Activated naive CD8-positive, alpha-beta T cell treated with anti-CD3 and anti-CD28 coated beads, Interleukin-2, amount 10 ng/mL, durations not matched to agents 7 days and 5 days (primary cell): ENCODE measurements at regions of chr6 and their contacts with region 1.

Region 1: DNA sequence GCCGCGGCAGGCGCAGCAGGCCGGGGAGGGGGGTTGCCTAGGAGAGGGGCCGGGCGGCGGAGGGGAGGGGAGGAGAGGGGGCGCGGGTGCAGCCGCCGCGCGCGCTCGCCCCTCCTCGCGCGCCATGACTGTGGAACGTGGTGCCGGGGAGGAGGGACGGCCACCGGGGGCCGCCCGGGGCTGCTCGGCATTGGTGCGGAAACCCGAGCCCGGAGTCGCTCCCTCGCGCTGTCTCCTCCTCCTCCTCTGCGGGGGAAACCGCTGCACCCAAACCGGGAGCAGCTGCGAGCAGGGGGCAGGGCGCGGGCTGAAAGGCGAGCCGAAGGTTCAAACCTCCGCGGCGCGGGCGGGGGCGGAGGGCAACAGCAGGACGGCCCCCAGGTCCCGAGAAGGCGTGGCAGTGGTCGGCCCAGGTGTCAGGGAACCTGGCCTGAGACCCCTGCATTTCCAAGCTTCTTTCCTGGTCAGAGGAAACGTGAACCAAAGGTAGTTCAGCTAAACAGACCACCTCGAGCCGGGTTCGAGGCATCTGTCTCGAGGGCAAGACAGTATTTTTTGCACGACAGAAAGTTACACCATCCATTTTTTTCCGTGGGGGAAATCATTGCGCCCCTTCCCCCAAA is 1.4 kb upstream of the TRERF1 start:
- DNase-seq: peak; percentile 81
- ATAC-seq: peak; percentile 81
- H3K4me3 Mint-ChIP-seq: peak overlapping the region; percentile 100
- H3K27ac Mint-ChIP-seq: no peak overlapping the region
- H3K4me1 Mint-ChIP-seq: peaks cover 29% of the 10 kb centered on the region
- H3K27me3 Mint-ChIP-seq: peaks cover 14% of the 10 kb centered on the region

Region 2: DNA sequence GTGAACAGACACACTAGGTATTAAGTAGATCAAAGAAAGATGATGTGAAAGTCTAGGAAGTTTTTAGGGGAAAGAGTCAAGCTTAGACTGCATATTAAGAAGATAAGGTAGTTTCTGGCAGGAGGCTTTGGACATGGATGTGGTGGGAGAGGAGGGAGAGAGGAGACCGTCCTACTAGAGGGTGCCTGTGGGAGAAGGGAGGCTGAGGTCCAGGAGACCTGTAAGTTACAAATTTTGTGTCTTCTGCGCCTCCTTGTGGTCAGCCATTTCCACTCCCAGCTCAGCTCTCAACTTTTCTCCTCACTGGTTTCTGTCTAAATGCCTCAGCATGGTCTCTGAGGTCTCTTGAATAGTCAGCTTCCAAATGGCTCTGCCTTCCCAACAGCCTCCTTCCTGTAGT is 1607.6 kb before region 1 on chr6:
- POLR2A ChIA-PET with region 1: no interaction called
- DNase-seq: no peak
- ATAC-seq: no peak
- H3K4me3 Mint-ChIP-seq: no peak overlapping the region
- H3K27ac Mint-ChIP-seq: no peak overlapping the region
- H3K4me1 Mint-ChIP-seq: peaks cover 5% of the 10 kb centered on the region
- H3K27me3 Mint-ChIP-seq: peaks cover 25% of the 10 kb centered on the region

Region 3: DNA sequence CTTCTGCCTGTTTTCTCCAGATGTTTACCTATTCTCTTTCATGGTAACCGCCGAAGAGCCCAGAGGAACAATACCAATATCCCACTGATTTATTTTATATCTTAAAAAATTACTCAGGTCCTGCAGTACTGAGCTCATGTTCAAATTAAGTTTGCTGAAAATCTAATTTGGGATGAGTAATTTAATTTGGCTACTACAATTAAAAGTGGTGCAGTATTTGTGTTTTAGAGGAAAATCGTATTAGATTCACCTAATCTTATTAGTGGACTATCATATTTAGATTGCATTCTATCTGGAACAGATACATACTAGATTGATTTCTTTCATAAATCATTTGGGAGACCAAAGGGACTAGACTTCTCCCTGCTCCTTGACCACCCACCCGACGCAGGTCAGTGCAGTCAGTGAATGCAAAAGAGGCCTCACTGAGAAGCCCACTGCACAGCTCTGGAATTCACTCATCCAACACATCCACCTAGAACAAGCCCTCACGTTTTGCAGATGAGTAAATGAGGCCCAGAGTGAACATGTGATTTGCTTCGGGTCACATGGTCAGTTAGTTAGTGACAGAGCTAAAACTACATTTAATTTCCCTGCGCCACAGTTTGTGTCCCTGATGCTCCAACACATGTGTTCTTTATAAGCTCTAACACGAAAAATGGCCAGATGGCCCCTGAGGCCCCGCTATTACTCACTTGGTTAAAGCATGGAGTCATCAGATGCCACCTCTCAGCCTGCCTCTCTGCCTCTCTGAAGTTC is 103.2 kb before region 1 on chr6:
- POLR2A ChIA-PET with region 1: no interaction called
- DNase-seq: no peak
- ATAC-seq: no peak
- H3K4me3 Mint-ChIP-seq: no peak overlapping the region
- H3K27ac Mint-ChIP-seq: no peak overlapping the region
- H3K4me1 Mint-ChIP-seq: peaks cover 23% of the 10 kb centered on the region
- H3K27me3 Mint-ChIP-seq: no peaks in the 10 kb centered on the region

Region 4: GRCh38 chr6:42367353-42368011 is 85.7 kb before region 1 on chr6:
- POLR2A ChIA-PET with region 1: interaction called, 10 read pairs
- DNase-seq: peak; percentile 43
- ATAC-seq: peak; percentile 43
- H3K4me3 Mint-ChIP-seq: peak overlapping the region; percentile 77
- H3K27ac Mint-ChIP-seq: peak overlapping the region; percentile 81
- H3K4me1 Mint-ChIP-seq: peaks cover 55% of the 10 kb centered on the region
- H3K27me3 Mint-ChIP-seq: no peaks in the 10 kb centered on the region

Region 5: GRCh38 chr6:42402184-42402583 is 51.0 kb before region 1 on chr6:
- POLR2A ChIA-PET with region 1: interaction called, 13 read pairs
- DNase-seq: no peak
- ATAC-seq: peak; percentile 86
- H3K4me3 Mint-ChIP-seq: peak overlapping the region; percentile 56
- H3K27ac Mint-ChIP-seq: peak overlapping the region; percentile 39
- H3K4me1 Mint-ChIP-seq: peaks cover 45% of the 10 kb centered on the region
- H3K27me3 Mint-ChIP-seq: no peaks in the 10 kb centered on the region

Region 6: DNA sequence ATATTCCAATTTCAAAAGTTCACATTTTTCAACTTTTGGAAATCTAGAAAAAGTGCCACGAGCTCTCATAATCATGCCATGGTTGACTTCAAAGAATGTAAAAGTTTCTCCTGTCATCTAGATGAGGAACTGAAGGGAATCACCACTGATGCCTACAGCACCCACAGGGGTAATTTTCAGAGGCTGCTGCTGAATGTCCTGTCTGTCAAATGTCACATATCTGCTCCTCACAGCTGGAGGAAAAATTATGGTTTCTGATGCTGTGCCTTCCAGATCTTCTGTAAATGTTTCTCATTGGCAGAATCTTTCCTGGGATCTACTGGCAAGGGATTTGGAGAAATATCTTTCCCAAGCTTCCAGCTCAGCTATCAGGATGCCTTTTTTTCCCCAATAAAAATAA is 31.1 kb after region 1 on chr6:
- POLR2A ChIA-PET with region 1: no interaction called
- DNase-seq: no peak
- ATAC-seq: no peak
- H3K4me3 Mint-ChIP-seq: no peak overlapping the region
- H3K27ac Mint-ChIP-seq: no peak overlapping the region
- H3K4me1 Mint-ChIP-seq: no peaks in the 10 kb centered on the region
- H3K27me3 Mint-ChIP-seq: peaks cover 9% of the 10 kb centered on the region